ENCODE measurements at regions of chr5 and their contacts with region 1.

Region 1: DNA sequence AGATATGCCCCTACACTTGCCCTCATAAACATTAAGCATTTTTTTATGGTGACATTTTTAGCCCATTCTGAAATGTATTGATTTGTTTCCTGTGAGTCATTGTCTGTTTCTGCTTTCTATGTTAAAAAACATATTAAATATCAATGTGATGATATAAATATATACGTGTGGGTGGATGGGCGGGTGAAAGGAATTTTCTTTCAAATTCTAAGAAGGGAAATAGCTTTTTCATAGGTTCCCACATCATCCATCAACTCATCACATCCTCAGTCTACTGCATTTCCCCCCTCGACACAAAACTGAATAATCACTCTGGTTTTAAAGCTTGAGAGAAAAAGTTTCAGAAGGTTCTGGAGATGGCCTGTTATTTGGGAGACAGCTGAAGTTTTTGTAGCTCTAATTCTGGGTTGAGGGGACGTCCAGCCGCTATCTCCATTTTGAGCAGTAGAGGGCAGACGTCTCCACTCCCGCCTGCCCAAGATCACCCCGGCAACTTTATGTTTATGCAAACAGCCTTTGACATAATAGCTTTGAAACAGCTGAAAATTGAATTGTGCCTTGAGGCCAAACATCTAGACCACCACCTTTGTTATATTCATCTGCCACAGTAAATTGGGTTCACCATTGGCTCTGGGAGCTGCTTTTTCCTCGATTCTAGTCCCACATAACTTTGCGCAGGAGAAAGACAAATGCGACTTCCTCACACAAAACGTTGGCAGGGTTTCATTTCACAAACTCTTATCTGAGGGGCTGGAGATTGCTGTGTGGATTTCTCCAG is 216.2 kb upstream of the CLINT1 start:
- DNase-seq: peak; percentile 53 to 60 (median 55)
- ATAC-seq: peak; percentile 97
- H3K4me3 ChIP-seq: no peak overlapping the region
- H3K27ac ChIP-seq: no peak overlapping the region
- H3K4me1 ChIP-seq: no peaks in the 10 kb centered on the region
- H3K27me3 ChIP-seq: peaks cover 3 to 5% of the 10 kb centered on the region in 2 experiments; a peak in 2 of 5 replicates
- CTCF ChIP-seq: peak; percentile 68 to 85 (median 77)
- EP300 ChIP-seq: no peak
- POLR2A ChIP-seq: no peak
- RAD21 ChIP-seq: peak; percentile 59 to 60

Region 2: DNA sequence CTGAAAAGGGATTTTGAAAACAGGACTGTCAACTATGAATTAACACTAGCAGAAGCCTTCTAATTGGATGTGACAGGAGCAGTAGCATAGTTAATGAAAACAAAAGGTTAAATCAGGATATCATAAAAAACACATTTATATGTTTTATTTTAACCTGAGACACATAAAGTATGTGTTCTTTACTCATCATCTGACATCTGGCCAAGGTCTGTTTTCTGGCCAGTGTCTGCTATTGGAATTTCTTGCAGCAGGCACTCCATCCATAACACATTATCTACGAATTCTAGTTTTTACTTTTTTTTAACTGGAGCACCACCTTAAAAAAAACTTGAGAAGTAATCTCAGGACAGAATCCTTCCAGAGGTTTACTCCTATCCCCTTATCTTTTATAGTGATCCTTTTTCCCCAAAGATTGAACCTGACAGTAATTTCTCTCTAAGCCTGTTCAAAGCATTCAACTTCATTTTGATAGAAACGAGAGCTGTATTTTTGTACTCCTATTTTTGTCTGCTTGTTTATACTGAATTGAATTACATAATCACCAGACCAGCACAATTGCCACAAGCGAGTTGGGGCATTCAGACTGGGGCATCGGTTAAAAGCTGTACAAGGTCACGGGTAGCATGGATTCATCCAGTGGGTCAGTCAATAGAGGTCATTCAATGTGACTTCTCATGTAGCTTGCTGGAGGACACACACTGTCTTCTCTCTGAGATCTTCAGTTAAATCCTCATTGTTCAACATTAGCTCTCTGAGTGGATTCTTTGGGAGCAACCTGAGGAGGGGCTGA is 10.7 kb before region 1 on chr5:
- CTCF ChIA-PET with region 1: no interaction called
- POLR2A ChIA-PET with region 1: interaction called, 10 read pairs
- in situ Hi-C with region 1: no loop called
- intact Hi-C with region 1: no loop called
- DNase-seq: no peak
- ATAC-seq: no peak
- H3K4me3 ChIP-seq: no peak overlapping the region
- H3K27ac ChIP-seq: no peak overlapping the region
- H3K4me1 ChIP-seq: no peaks in the 10 kb centered on the region
- H3K27me3 ChIP-seq: no peaks in the 10 kb centered on the region
- CTCF ChIP-seq: no peak
- EP300 ChIP-seq: no peak
- POLR2A ChIP-seq: no peak
- RAD21 ChIP-seq: no peak

Region 3: GRCh38 chr5:158180407-158180806 is 105.2 kb after region 1 on chr5:
- CTCF ChIA-PET with region 1: no interaction called
- POLR2A ChIA-PET with region 1: no interaction called
- in situ Hi-C with region 1: no loop called
- intact Hi-C with region 1: no loop called
- DNase-seq: no peak
- ATAC-seq: no peak
- H3K4me3 ChIP-seq: no peak overlapping the region
- H3K27ac ChIP-seq: no peak overlapping the region
- H3K4me1 ChIP-seq: no peaks in the 10 kb centered on the region
- H3K27me3 ChIP-seq: no peaks in the 10 kb centered on the region
- CTCF ChIP-seq: no peak
- EP300 ChIP-seq: no peak
- POLR2A ChIP-seq: no peak
- RAD21 ChIP-seq: no peak

Region 4: DNA sequence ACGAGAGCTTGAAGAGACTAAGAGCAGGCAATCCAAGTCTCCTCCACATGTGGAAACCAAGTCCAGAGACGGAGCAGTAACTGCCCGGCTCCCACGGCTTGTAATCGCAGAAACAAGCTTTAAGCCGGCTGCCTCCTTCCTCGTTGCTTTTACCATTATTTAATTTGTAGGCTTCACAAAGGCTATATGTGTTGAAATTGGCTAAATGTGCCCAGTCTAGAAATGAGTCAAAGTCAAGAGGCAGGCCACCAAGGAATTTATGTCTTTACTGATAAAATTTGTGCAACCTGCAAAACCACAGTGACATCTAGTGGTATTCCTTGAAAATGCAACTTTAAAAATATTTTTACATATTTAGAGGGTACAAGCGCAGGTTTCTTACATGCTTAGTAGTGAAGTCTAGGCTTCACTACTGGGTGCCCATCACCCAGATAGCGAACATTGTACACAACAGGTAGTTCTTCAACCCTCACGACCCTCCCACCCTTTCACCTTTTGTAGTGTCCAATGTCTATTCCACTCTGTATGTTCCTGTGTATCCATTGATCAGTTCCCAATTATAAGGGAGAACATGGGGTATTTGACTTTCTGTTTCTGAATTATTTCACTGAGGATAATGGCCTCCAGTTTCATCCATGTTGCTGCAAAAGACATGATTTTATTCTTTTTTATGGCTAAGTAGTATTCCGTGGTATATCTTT is 1058.0 kb after region 1 on chr5:
- CTCF ChIA-PET with region 1: interaction called, 3 read pairs
- POLR2A ChIA-PET with region 1: no interaction called
- in situ Hi-C with region 1: no loop called
- intact Hi-C with region 1: loop called (anchors 1 kb)
- DNase-seq: peak; percentile 18 to 65 (median 38)
- ATAC-seq: peak; percentile 72
- H3K4me3 ChIP-seq: no peak overlapping the region
- H3K27ac ChIP-seq: no peak overlapping the region
- H3K4me1 ChIP-seq: peaks cover 0 to 3% of the 10 kb centered on the region in 2 experiments; a peak in 2 of 5 replicates
- H3K27me3 ChIP-seq: peaks cover 0 to 8% of the 10 kb centered on the region in 2 experiments; a peak in 4 of 5 replicates
- CTCF ChIP-seq: peak; percentile 59 to 94 (median 68); a peak in 5 of 6 replicates
- EP300 ChIP-seq: no peak
- POLR2A ChIP-seq: no peak
- RAD21 ChIP-seq: peak; percentile 90 to 94

Measured in K562 (cell line).